ENCODE measurements at regions of chr21 and their contacts with region 1.

Region 1: DNA sequence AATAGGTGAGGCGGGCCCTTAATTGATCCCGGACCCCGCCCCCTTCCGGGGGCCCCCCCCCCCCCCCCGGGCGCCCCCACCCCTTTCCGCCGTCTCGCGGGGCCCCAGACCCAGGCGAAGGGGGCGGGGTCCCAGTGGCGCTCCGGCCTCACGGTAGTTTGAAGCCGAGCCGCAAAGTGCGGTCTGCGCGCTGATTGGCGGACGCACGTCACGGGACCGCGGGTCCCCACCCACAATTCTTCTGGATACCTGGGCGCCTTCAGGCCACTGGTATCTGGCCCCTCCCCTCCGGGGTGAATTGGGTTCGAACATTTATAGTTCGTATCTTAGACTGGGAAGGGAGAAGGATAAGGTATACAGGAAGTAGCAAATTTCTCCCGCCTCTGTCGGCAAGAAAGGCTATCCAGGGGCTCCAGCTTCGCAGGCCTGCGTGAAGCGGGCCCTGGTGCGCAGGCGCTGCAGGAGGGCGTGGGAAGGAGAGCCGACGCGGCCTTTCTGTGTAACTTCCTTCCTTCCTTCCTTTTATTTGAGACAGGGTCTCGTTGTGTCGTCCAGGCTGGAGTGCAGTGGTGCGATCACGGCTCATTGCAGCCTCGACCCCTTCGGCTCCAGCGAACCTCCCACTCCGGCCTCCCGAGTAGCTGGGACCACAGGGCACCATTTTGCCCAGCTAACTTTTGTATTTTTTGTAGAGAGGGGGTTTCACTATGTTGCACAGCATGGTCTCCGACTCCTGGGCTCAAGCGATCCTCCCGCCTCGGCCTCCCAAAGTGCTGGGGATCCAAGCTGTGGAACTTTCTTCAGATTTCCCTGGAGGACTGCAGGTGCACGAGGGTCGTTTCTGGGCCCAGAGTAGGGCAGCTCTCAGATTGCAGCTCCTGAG is 564 bp upstream of the HMGN1 start:
- DNase-seq: peak; percentile 98

Region 2: DNA sequence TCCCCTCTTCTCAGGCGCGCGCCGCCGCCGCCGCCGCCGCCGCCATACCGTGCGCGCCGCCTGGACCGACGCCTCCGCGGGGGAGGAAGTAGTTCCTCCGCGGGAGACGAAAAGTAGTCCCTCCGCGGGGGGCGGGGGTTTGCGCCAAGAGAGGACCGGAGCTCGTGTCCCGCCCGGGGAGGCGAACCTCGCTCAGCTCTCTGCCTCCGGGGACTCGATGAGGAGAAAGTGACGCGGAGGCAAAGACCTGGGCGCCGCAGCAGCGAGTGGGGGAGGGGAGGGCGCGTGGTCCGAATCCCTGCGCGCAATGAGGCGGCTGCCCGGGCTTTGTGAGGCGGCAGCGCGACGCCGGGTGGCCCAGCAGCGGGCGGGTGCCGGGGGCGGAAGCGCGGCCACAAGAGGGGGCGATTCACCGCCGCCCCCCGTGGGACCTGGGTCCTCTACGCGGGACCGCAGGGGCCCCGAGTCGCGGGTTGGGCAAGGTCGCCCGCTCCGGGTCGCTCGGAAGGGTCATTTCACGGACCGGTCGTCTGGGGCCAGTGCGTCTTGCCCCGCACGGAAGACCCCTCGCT is 35.8 kb before region 1 on chr21 and contains the start of gene BRWD1:
- CTCF ChIA-PET with region 1: no interaction called
- POLR2A ChIA-PET with region 1: interaction called, 37 read pairs
- DNase-seq: peak; percentile 78

Region 3: DNA sequence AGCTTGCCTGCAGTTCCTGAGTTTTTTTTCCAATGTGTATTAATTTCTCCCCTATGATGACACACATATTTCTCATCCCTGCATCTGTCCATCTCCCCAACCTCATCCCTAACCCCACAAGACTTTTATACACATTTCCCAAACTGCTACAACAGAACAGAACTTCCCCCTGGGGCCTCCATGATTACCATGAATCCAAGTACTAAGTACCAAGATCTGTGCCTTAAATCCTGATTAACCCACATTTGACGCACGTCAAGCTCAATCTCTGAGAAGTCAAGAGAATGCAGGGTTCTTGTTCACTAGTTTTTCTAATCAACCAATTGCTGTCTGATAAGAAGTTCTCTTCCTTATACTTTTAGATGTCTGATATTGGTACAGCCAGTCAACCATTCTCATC is 10.2 kb before region 1 on chr21:
- CTCF ChIA-PET with region 1: no interaction called
- POLR2A ChIA-PET with region 1: interaction called, 15 read pairs
- DNase-seq: no peak

Region 4: DNA sequence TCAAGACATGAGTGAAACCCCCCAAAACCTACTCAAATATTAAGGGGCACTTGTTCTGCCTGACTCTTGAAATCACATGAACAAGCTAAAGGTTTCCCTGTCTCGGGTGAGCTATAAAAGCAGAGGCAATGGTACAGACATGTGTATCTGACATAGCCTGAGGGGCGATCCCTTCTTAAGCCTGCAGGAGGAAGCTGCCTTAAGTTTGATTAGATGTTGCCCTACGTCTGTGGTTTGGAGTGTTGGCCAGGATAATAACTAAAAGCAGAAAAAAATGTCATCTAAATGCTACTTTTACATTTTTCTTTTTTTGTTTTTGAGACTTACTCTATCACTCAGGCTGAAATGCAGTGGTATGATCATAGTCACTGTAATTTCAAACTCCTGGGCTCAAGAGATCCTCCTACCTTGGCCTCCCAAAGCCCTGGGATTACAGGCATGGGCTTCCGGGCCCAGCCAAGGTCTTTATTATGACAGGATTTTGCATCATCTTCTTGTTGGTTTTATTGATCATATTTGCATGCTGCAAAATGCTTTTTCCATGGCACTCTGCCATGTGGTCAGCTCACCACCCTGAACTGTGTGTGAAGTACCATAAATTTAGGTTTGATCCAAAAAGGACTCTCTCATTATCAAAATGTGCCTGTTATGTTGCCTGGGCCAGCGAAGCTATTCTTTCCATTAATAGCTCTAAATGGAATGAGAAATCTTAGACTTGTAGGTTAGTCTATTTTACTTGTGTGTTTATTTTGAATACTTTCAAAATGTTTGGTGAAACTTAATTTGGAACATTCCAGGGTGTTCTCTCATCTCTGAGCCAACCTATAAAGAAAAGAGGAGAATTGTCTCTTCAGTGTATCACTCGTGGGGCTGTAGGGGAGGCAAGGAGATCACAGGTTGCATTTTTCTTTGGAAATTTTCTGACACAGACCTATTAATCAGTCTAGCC is 14.4 kb after region 1 on chr21:
- CTCF ChIA-PET with region 1: interaction called, 3 read pairs
- POLR2A ChIA-PET with region 1: interaction called, 18 read pairs
- DNase-seq: no peak

Region 5: GRCh38 chr21:39373644-39374043 is 24.2 kb after region 1 on chr21:
- CTCF ChIA-PET with region 1: no interaction called
- POLR2A ChIA-PET with region 1: interaction called, 14 read pairs
- DNase-seq: peak; percentile 67

Region 6: DNA sequence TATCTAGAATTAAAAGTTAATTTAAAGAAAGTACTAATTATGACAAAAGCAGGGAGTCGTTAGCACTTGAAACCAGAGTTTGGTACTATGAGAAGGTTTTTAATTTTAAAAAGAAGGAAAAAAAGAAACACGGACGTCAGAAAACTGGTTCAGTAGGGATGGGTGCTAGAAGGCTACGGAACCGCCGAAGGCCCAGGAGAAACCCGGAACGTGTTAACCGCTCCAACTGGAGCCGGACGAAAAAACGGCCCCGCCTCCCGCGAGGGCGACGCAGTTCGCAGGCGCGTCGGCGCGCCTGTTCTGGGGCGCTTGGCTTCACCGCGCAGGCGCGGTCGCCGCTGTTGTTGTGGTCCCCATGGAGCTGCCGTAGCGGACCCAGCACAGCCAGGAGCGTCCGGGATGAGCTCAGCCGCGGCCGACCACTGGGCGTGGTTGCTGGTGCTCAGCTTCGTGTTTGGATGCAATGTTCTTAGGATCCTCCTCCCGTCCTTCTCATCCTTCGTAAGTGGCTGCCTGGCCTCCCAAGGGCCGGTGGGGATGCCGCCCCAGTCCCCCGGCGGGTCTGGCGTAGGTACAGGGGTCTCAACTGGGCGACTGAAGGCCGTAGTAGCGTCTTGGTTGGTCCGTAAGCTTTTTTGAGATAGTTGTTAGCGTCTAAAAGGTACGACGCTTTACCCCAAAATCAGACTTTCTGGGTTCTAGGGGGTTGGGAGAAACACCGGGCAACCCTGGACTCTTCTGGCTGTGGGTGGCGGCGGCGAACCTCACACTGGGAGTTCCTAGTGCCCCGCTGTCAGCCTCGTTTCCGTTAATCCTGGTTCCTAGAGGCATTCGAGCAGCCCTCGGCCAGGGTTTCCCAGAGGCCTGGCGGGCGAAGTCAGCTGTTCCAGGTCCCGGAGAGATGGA is 30.8 kb after region 1 on chr21:
- CTCF ChIA-PET with region 1: no interaction called
- POLR2A ChIA-PET with region 1: interaction called, 41 read pairs
- DNase-seq: peak; percentile 97

Region 7: DNA sequence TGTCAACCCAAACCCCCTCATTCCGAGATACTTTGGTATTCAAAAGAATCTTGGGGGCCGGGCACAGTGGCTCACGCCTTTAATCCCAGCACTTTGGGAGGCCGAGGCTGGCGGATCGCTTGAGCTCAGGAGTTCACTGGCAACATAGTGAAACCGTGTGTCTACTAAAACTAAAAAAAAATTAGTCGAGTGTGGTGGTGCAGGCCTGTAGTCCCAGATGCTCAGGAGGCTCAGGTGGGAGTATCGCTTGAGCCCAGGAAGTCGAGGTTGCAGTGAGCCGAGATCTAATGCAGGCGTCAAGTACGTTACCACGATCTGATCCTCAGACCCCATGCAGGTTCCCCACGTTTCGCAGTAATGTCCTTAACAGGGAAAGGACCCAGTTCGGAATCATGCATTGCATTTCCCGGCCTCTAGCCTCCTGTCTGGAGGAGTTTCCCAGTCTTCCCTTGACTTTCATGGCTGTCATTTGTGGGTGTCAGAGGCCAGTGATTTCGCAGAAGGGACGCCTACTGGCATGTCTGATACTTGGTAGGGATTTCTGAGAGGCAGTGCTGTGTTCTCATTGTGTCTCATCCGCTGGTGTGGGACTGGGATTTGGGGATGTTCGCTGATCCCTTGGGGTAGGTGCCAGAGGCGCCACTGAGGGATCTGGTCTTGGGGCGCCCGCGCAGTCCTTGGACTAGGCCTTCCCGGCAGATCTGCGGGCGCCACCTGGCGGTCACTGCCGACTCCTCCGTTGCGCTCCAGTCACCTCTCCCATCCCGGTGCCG is 38.8 kb after region 1 on chr21:
- CTCF ChIA-PET with region 1: no interaction called
- POLR2A ChIA-PET with region 1: interaction called, 41 read pairs
- DNase-seq: peak; percentile 92

Region 8: GRCh38 chr21:39537571-39537970 is 188.1 kb after region 1 on chr21:
- CTCF ChIA-PET with region 1: no interaction called
- POLR2A ChIA-PET with region 1: no interaction called
- DNase-seq: no peak

Measured in HEK293T (cell line).